Gastrocnemius medialis (tissue), 4 donors: ENCODE measurements at regions of chr6 and their contacts with region 1.

Region 1: GRCh38 chr6:5003604-5004372 is at the start of gene RPP40:
- DNase-seq: peak; percentile 93 to 95
- ATAC-seq: peak; percentile 99
- H3K4me3 ChIP-seq: peak within 1 kb of the TSS; percentile 67 to 83 (median 76)
- H3K27ac ChIP-seq: peak within 1 kb of the TSS; percentile 87 to 90 (median 88)
- H3K4me1 ChIP-seq: peaks cover 5 to 7% of the 10 kb centered on the region in 2 donors
- H3K27me3 ChIP-seq: no peaks in the 10 kb centered on the region
- CTCF ChIP-seq: peak; percentile 72 to 97 (median 82)
- POLR2A ChIP-seq: peak in 1 of 2 donors; percentile 38
- total RNA-seq, gene RPP40: 5.1 to 16.4 (median 12.2) TPM

Region 2: DNA sequence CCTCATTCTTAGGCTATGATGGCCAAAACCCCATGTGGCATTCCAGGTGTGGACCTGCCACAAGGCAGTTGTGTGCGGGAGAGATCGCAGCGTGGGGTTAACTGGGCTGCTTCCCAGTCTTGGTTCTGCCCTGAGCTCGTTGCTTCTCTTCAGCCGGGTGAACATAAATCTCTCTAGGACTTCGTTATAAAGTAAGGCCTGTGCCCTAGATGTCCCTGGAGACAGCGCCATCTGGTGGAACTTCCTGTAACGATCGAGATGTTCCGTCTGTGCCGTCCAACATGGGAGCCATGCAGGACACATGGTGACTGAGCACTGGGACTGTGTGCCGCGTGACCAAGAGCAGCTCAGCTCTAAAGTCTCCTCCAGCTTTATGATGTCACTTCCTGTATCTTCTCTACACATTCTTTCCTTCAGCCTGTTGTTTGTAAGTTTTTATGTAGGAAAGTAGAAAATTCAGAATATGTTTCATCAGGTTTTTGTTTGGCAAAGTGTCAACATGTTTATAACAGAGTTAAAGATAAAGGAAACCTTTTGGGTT is 26.9 kb after region 1 on chr6:
- in situ Hi-C with region 1: no loop called
- intact Hi-C with region 1: loop called (anchors 1 kb)
- DNase-seq: peak; percentile 38 to 80
- ATAC-seq: peak; percentile 38 to 79
- H3K4me3 ChIP-seq: no peak overlapping the region
- H3K27ac ChIP-seq: no peak overlapping the region
- H3K4me1 ChIP-seq: peaks cover 0 to under 1% of the 10 kb centered on the region in 2 donors
- H3K27me3 ChIP-seq: no peaks in the 10 kb centered on the region
- CTCF ChIP-seq: peak; percentile 38 to 67 (median 53)
- POLR2A ChIP-seq: no peak

Region 3: GRCh38 chr6:5072440-5072839 is 68.7 kb after region 1 on chr6:
- in situ Hi-C with region 1: no loop called
- intact Hi-C with region 1: no loop called
- DNase-seq: no peak
- ATAC-seq: no peak
- H3K4me3 ChIP-seq: no peak overlapping the region
- H3K27ac ChIP-seq: no peak overlapping the region
- H3K4me1 ChIP-seq: no peaks in the 10 kb centered on the region
- H3K27me3 ChIP-seq: no peaks in the 10 kb centered on the region
- CTCF ChIP-seq: no peak
- POLR2A ChIP-seq: no peak

Region 4: DNA sequence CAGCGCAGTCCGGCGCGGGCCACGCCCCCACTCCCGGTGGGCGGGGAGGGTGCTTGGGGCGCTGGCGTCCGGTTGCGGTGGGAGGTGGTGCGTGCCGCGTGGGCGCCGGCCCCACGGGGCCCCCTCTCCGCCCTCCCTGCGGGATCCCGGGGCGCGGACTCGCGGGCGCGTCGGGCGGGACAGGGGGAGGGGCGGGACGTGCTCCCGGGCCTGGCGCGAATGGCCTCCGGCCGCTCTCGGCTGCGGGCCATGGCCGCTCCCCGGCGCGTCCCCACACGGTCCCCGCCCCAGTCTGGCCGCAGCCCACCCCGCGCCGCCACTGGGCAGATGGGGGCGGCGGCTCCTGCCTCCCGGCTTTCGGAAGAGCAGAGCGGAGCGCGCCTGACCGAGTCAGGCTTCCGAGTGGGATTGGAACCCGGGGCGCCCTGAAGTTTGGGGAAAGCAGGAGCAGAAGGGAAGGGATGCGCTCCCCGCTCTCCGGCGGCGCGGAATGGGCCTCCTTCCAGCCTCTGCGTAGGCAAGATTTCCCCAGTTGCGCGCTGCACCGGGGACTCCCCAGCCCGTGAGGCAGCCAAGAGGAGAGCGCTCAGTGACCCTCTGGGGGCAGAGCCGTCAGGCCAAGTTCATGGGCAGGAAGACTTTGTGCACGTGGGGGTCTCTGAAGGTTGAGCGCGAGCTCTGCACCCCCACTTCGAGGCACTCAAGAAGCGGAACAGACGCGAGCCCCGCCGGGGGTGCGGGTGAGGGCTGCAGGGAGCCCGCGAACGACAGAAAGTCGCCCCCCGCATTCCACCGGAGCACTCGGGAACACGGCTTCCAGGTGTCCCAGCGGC is 80.8 kb after region 1 on chr6:
- in situ Hi-C with region 1: no loop called
- intact Hi-C with region 1: loop called (anchors 5 kb)
- DNase-seq: peak in 1 of 2 donors; percentile 28
- ATAC-seq: peak; percentile 50 to 67
- H3K4me3 ChIP-seq: peak overlapping the region; percentile 65 to 80 (median 75)
- H3K27ac ChIP-seq: peak overlapping the region; percentile 41 to 67 (median 56)
- H3K4me1 ChIP-seq: peaks cover 0 to 15% of the 10 kb centered on the region in 2 donors
- H3K27me3 ChIP-seq: peaks cover 0 to 14% (median 5%) of the 10 kb centered on the region in 3 donors
- CTCF ChIP-seq: no peak
- POLR2A ChIP-seq: peak; percentile 25 to 37

Region 5: DNA sequence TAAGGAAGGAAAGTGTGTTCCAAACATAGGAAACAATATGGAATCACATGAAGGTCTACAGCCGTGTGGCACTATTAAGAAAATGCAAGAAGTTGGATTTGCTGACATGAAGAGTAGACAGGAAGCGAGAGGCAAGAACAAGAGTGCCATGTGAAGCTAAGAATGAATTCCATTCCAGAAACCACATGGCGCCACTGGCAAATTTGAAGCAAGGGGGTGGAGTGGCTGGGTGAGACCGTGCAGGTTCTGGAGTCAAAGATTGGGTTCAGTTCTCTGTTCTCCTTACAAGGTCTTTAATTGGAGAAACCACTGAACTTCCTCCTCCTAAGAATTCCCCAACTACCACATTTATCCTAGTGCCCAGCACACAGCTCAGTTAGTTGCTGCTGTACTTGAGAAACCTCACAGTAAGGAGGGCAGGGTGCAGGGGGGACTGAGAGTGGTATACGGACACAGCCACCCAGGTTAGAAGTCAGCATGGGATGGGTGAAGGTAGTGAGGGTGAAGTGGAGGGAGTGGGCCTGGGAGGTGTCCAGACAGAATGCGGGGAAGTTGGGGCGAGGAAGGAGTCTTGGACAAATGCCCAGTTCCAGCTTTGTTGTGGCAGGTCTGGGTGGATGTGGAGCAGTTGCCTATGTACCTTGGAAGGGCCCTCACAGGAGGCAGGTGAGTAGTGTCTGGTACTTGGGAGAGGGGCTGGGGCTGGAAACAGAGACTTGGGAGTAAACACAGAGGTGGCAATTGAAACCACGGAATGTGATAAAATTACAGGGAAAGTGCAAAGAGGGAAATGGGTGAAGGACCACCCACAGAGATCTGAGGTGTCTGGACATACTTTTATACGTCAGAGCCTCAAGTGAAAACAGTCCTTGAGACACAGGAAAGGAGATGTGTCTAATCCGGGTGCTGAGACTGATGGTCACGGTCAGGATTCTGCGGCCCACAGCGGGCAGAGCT is 242.6 kb after region 1 on chr6:
- in situ Hi-C with region 1: no loop called
- intact Hi-C with region 1: no loop called
- DNase-seq: no peak
- ATAC-seq: no peak
- H3K4me3 ChIP-seq: no peak overlapping the region
- H3K27ac ChIP-seq: no peak overlapping the region
- H3K4me1 ChIP-seq: no peaks in the 10 kb centered on the region
- H3K27me3 ChIP-seq: no peaks in the 10 kb centered on the region
- CTCF ChIP-seq: no peak
- POLR2A ChIP-seq: no peak